SK-N-SH (cell line): ENCODE measurements at regions of chr4 and their contacts with region 1.

Region 1: GRCh38 chr4:2220016-2220630 is 21.8 kb downstream of the HAUS3 start:
- DNase-seq: peak; percentile 63
- H3K4me3 ChIP-seq: no peak overlapping the region; a peak in 1 of 4 replicates
- H3K27ac ChIP-seq: no peak overlapping the region
- H3K4me1 ChIP-seq: no peaks in the 10 kb centered on the region; a peak in 1 of 4 replicates
- H3K27me3 ChIP-seq: no peaks in the 10 kb centered on the region
- CTCF ChIP-seq: peak; percentile 90
- EP300 ChIP-seq: no peak
- RAD21 ChIP-seq: peak; percentile 96

Region 2: DNA sequence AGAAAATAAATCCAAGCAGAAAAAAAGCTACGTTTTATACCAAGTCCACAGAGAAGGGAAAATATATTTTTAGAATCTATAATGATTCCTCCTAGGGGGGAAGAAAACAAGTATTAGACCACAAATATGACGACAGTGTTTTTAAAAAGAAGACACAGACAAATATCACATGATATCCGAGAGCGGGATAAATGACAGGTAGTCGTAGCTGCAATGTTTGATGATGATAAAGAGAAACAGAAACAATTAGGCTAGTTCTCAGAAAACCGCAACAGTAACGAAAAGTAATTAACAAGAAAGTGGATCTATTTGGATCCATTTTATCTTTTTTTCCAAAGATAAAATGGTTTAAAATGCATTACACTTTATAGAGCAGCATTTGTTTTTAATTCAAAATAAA is 20.9 kb after region 1 on chr4:
- CTCF ChIA-PET with region 1: interaction called, 21 read pairs
- POLR2A ChIA-PET with region 1: no interaction called
- DNase-seq: no peak
- H3K4me3 ChIP-seq: peak overlapping the region; percentile 81 to 96
- H3K27ac ChIP-seq: peak overlapping the region in 1 of 2 experiments; percentile 24; a peak in 2 of 4 replicates
- H3K4me1 ChIP-seq: peaks cover 25 to 28% of the 10 kb centered on the region in 2 experiments; a peak in 3 of 4 replicates
- H3K27me3 ChIP-seq: no peaks in the 10 kb centered on the region
- CTCF ChIP-seq: no peak
- EP300 ChIP-seq: no peak
- RAD21 ChIP-seq: no peak

Region 3: GRCh38 chr4:2412885-2413716 is 193.0 kb after region 1 on chr4:
- CTCF ChIA-PET with region 1: interaction called, 30 read pairs
- POLR2A ChIA-PET with region 1: no interaction called
- DNase-seq: peak; percentile 89
- H3K4me3 ChIP-seq: peak overlapping the region; percentile 43 to 57
- H3K27ac ChIP-seq: peak overlapping the region; percentile 82 to 97
- H3K4me1 ChIP-seq: peaks cover 11 to 40% of the 10 kb centered on the region in 2 experiments; a peak in 2 of 4 replicates
- H3K27me3 ChIP-seq: 0 out of 2 replicates have a peak, but pooled peaks cover 16% of the 10 kb centered on the region
- CTCF ChIP-seq: peak; percentile 62
- EP300 ChIP-seq: 0 out of 4 replicates have a peak, but pooled peaks have one; percentile 28 to 40
- RAD21 ChIP-seq: peak; percentile 55

Region 4: DNA sequence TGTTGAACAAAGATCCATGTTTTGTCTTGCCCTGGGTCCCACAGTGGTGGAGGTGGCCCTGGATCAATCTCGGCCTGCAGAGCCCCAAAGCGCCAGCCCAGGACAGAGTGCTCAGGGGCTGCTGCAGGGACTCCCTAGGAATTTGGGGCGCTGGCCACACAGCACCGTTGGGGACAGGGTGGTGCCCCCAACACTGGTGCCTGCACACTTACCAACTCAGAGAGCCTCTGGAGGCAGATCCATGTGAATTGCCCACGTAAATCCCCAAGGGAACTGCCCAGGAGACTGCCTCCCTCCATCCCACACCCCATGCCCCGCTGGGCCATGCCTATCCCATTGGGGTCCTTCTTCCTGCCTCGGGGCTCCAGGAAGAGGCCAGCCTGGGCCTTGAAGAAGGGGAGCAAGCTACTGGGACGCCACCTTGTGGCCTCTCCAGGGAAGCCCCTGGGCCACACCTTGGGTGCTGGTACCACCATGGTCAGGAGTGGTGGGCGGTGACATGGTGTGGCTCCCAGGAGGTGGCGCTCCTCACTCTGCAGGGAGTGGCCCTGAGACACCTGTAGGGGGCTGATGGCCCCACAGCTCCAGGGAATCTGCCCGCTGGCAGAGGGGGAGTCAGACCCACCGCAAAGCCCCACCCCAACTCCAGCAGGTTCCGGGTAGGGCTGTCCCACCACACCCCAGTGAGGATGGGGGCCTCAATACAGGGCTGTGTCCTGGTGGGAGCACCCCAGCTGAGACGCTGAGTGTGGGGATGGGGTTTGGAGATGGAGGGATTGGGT is 221.5 kb after region 1 on chr4:
- CTCF ChIA-PET with region 1: interaction called, 19 read pairs
- POLR2A ChIA-PET with region 1: no interaction called
- DNase-seq: peak; percentile 83
- H3K4me3 ChIP-seq: no peak overlapping the region
- H3K27ac ChIP-seq: no peak overlapping the region
- H3K4me1 ChIP-seq: peaks cover 0 to 4% of the 10 kb centered on the region in 2 experiments; a peak in 1 of 4 replicates
- H3K27me3 ChIP-seq: no peaks in the 10 kb centered on the region
- CTCF ChIP-seq: peak; percentile 67
- EP300 ChIP-seq: no peak
- RAD21 ChIP-seq: peak; percentile 59

Region 5: DNA sequence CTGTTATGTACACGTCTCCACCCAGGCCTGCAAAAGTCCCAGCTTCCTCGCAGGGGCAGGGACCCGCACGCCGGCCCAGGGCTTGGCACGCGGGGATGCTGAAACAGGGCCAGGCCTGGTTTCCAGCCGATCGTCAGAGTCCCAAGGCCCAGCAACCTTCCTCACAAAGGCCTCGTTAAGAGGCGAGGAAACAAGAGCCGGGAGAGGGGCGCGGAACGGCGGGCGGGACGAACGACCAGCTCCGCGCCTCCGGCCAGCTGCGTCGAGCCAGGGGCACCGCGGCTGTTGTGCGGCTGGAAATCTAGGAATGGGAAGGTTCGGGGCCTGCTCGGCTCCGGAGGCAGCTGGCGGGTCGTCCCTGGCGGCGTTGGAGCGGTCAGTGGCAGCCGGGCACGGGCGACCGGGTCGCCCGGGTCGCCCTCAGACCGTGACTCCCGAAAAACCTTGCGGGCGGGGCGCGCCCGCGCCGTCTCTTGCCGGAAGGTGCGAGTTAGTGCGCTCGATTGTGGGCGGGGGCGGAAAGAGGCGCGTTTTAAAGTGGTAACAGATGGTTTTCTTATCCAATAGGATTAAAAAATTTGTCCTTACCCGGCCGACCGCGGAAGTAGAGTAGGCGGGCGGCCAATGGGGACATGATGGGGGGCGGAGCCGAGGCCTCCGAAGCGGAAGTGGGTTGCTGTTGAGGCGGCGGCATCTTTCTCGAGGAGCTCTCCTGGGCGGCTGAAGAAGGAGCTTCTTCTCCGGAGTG is 248.5 kb after region 1 on chr4 and contains the start of gene RNF4:
- CTCF ChIA-PET with region 1: interaction called, 27 read pairs
- POLR2A ChIA-PET with region 1: interaction called, 9 read pairs
- DNase-seq: peak; percentile 99
- H3K4me3 ChIP-seq: peak within 1 kb of the TSS; percentile 88 to 93
- H3K27ac ChIP-seq: peak within 1 kb of the TSS; percentile 86 to 87
- H3K4me1 ChIP-seq: peaks cover 6 to 7% of the 10 kb centered on the region in 2 experiments; a peak in 3 of 4 replicates
- H3K27me3 ChIP-seq: no peaks in the 10 kb centered on the region
- CTCF ChIP-seq: no peak
- EP300 ChIP-seq: 0 out of 4 replicates have a peak, but pooled peaks of 1 of the 2 experiments have one; percentile 4
- RAD21 ChIP-seq: no peak
- polyA plus RNA-seq, gene RNF4: 60.7 and 85.3 TPM in 2 replicates

Region 6: DNA sequence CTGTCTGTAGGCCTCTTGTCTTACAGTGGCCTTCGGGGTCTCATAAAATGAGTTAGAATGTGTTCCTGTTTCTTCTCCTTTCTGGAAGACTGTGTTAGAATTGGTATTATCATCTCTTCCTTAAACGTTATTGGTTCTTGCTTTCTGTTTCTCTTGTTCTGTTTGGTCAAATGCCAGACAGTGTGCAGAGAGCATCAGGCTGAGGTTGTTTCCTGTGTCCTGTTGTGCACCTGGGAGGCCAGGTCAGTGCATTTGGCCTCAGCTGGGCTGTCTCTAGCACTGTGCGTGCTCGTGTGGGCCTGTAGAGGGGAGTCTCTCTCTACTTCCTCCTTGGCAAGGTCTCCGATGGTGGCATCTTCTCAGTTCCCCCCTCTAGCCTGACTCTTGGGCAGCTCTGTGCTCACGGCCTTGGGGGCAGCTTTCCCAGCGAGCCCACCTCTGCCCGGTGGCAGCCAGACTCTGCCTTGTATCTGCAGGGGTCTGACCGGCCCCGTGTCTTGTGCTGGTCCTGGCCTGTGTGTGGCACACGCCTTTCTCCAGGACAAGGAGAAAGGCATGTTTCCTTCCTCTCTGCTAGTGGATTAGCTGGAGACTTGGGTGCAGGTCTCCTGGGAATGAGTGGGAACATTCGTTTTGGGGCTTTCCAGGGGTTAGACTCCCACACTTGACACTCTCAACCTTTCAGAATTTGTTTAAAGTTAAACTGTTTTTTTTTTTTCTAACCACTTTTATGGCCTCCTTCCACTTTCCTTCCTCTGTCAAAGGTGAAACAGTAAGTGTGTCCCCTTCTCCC is 378.6 kb after region 1 on chr4:
- CTCF ChIA-PET with region 1: no interaction called
- POLR2A ChIA-PET with region 1: no interaction called
- DNase-seq: peak; percentile 54
- H3K4me3 ChIP-seq: no peak overlapping the region
- H3K27ac ChIP-seq: peak overlapping the region in 1 of 2 experiments; percentile 89; a peak in 2 of 4 replicates
- H3K4me1 ChIP-seq: peaks cover 5 to 65% of the 10 kb centered on the region in 2 experiments; a peak in 2 of 4 replicates
- H3K27me3 ChIP-seq: no peaks in the 10 kb centered on the region
- CTCF ChIP-seq: no peak
- EP300 ChIP-seq: peak in 1 of 2 experiments; percentile 18; a peak in 1 of 4 replicates
- RAD21 ChIP-seq: peak; percentile 36